ENCODE measurements at regions of chr18 and their contacts with region 1.

Region 1: GRCh38 chr18:23094411-23095190 is 40.7 kb upstream of the CABLES1 start:
- DNase-seq: no peak
- H3K4me3 ChIP-seq: no peak overlapping the region
- H3K4me3 Mint-ChIP-seq: no peak overlapping the region
- H3K27ac ChIP-seq: no peak overlapping the region
- H3K27ac Mint-ChIP-seq: no peak overlapping the region
- H3K4me1 ChIP-seq: no peaks in the 10 kb centered on the region
- H3K4me1 Mint-ChIP-seq: peaks cover 0 to 5% (median 1%) of the 10 kb centered on the region in 4 donors
- H3K27me3 ChIP-seq: no peaks in the 10 kb centered on the region
- H3K27me3 Mint-ChIP-seq: peaks cover 0 to 3% of the 10 kb centered on the region in 2 donors

Region 2: GRCh38 chr18:23049698-23050373 is 44.8 kb before region 1 on chr18:
- CTCF ChIA-PET with region 1: no interaction called
- POLR2A ChIA-PET with region 1: no interaction called
- intact Hi-C with region 1: loop called (anchors 5 kb)
- DNase-seq: peak in 4 of 5 donors; percentile 30 to 50 (median 40)
- H3K4me3 ChIP-seq: peak overlapping the region; percentile 12 to 18
- H3K4me3 Mint-ChIP-seq: peak overlapping the region in 7 of 8 donors; percentile 8 to 75 (median 49)
- H3K27ac ChIP-seq: no peak overlapping the region
- H3K27ac Mint-ChIP-seq: peak overlapping the region in 6 of 7 donors; percentile 42 to 88 (median 74)
- H3K4me1 ChIP-seq: peaks cover 17% of the 10 kb centered on the region
- H3K4me1 Mint-ChIP-seq: peaks cover 10 to 26% (median 15%) of the 10 kb centered on the region in 4 donors
- H3K27me3 ChIP-seq: no peaks in the 10 kb centered on the region
- H3K27me3 Mint-ChIP-seq: peaks cover 0 to 2% of the 10 kb centered on the region in 2 donors

Region 3: GRCh38 chr18:23071285-23071684 is 23.3 kb before region 1 on chr18:
- CTCF ChIA-PET with region 1: no interaction called
- POLR2A ChIA-PET with region 1: no interaction called
- intact Hi-C with region 1: no loop called
- DNase-seq: peak; percentile 87 to 93 (median 90)
- H3K4me3 ChIP-seq: peak overlapping the region in 1 of 2 donors; percentile 13
- H3K4me3 Mint-ChIP-seq: peak overlapping the region; percentile 37 to 95 (median 76)
- H3K27ac ChIP-seq: no peak overlapping the region
- H3K27ac Mint-ChIP-seq: peak overlapping the region; percentile 74 to 96 (median 92)
- H3K4me1 ChIP-seq: peaks cover 64% of the 10 kb centered on the region
- H3K4me1 Mint-ChIP-seq: peaks cover 51 to 79% (median 59%) of the 10 kb centered on the region in 4 donors
- H3K27me3 ChIP-seq: no peaks in the 10 kb centered on the region
- H3K27me3 Mint-ChIP-seq: no peaks in the 10 kb centered on the region

Measured in CD4-positive, alpha-beta memory T cell (primary cell).